Calu3 (cell line): ENCODE measurements at regions of chr2 and their contacts with region 1.

Region 1: DNA sequence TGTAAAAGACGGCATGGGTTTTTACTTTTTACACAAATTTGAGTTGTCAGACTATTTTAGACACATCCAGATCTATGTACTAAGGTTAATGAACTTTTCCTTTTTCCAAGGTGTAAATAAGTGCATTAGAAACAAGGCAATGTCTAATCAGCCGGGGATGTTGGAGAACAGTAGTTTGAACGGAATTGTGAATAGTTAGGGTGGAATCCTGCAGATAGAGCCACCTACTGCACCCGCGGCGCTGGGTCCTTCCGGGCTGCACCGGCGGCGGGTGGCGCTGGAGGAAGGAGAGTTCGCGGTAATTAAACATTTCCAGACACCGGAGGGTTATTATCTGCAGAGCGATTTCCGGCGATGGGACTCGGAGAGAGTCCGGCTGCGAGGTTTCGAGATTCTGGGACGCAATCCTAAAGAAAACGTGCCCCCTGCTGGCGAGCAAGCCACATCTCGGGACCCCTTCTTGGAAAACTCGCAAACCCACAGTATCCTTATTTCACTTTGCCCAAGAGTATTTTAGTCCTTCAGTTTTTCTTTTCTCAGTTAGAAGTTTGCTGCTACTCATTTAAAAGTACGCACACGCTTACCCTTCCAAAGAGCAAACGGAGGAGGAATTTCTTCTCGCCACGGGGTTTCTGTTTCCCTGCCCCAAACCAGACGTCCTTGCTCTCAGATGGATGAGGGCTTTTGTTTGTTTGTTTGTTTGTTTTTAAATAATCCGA is 4.5 kb upstream of the OSR1 start:
- DNase-seq: peak; percentile 82
- H3K4me3 Mint-ChIP-seq: peak overlapping the region; percentile 81
- H3K27ac Mint-ChIP-seq: peak overlapping the region; percentile 46
- H3K4me1 Mint-ChIP-seq: peaks cover 10% of the 10 kb centered on the region
- H3K27me3 Mint-ChIP-seq: peaks cover 57% of the 10 kb centered on the region
- CTCF ChIP-seq: peak; percentile 64

Region 2: DNA sequence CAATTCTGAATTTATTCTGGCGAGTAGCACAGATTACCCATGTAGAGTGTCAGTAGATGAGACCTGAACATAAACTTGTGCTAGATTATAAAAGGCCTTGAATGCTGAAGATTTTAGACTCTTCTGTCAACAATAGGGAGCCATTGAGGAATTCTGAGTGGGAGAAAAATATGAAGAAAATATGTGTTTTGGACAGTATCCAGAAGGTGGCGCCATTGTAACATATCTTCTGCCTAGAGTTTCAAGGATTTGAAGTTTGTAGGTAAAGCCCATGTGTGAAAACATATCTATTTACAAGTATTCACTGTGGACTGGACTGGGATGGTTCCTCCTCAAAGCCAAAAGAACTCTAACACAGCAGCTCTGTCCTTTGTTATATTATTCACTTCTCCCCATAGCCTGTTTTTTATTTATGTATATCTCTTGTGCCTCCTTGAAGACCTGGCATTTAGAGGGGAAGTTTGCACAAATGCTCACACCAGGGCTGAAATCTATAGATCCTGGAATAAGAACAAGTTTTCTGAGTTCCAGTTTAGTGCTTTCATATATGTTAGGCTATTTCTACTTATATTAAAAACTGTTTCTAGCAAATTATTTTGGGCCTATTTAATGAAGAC is 927.4 kb before region 1 on chr2:
- CTCF ChIA-PET with region 1: no interaction called
- intact Hi-C with region 1: loop called (anchors 5 kb)
- DNase-seq: peak; percentile 46
- H3K4me3 Mint-ChIP-seq: no peak overlapping the region
- H3K27ac Mint-ChIP-seq: no peak overlapping the region
- H3K4me1 Mint-ChIP-seq: no peaks in the 10 kb centered on the region
- H3K27me3 Mint-ChIP-seq: peaks cover 43% of the 10 kb centered on the region
- CTCF ChIP-seq: peak; percentile 59

Region 3: DNA sequence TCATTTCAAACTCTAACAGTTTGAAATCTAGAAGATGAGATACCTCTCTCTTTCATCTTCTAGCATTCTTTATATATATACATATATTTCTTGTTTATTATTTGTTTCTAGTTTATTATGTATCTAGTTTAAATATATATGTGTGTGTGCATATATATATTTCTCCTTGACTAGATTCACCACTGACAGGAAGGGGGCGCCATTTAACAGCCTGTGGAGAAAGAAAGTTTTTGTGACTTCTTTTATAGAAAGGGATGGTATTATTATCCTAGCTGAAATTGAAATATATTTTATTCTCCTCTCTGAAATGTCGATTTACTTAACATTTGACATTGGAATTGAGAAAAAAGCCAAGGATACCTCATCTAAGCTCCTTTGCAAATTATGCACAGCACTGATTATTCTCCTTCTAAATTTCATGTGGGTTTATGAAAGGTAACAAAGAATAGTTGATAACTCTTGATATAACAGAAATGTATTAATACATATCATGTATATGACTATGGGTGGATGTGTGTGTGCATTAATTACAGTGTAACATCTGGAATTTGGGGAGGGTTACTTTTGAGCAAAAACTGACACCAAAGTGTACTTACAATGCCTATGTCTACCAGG is 612.9 kb before region 1 on chr2:
- CTCF ChIA-PET with region 1: no interaction called
- intact Hi-C with region 1: loop called (anchors 1 kb)
- DNase-seq: peak; percentile 68
- H3K4me3 Mint-ChIP-seq: no peak overlapping the region
- H3K27ac Mint-ChIP-seq: no peak overlapping the region
- H3K4me1 Mint-ChIP-seq: no peaks in the 10 kb centered on the region
- H3K27me3 Mint-ChIP-seq: no peaks in the 10 kb centered on the region
- CTCF ChIP-seq: peak; percentile 42

Region 4: DNA sequence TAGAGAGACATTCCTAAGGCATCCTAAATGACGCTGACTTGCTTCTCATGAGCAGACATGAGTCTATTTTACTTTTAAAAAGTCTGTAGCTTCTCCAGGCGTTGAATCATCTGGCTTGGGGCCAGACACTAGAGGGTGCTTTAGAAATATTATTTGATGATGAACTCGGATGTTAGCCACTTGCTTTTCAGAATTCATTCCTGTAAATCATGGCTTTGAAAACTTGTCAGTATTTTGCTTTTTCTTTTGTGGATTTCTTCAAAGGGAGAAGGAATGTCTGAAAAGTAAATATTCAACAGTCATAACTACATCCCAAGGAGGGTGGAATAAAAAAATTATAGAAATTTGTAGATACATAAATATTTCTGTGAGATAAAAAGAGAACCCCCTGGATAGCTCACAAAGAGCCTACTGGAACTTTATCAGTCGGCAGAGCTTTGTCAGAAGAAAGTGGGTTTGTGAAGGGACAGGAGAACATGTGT is 375.3 kb before region 1 on chr2:
- CTCF ChIA-PET with region 1: no interaction called
- intact Hi-C with region 1: loop called (anchors 1 kb)
- DNase-seq: peak; percentile 64
- H3K4me3 Mint-ChIP-seq: no peak overlapping the region
- H3K27ac Mint-ChIP-seq: no peak overlapping the region
- H3K4me1 Mint-ChIP-seq: peaks cover 14% of the 10 kb centered on the region
- H3K27me3 Mint-ChIP-seq: no peaks in the 10 kb centered on the region
- CTCF ChIP-seq: no peak

Region 5: DNA sequence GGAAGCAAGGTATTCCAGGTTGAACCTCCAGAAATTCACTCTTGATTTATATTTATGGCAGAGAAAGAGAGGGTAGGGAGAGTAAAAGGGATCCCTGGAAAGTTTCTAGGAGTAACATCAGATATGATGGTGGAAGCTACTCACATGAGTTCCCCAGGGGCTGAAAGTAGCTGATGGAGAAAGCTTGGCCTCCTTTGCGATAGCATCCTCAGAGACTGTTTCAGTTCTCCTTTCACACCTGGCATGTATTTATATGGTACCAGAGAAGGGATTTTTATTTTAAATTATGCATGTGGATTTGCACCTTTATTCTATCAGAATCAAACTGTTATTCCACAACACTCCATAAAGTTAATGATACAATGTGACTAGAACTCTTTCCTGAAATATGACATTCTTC is 121.8 kb after region 1 on chr2:
- CTCF ChIA-PET with region 1: no interaction called
- intact Hi-C with region 1: no loop called
- DNase-seq: no peak
- H3K4me3 Mint-ChIP-seq: no peak overlapping the region
- H3K27ac Mint-ChIP-seq: no peak overlapping the region
- H3K4me1 Mint-ChIP-seq: peaks cover 25% of the 10 kb centered on the region
- H3K27me3 Mint-ChIP-seq: no peaks in the 10 kb centered on the region
- CTCF ChIP-seq: no peak

Region 6: GRCh38 chr2:19504400-19505198 is 141.7 kb after region 1 on chr2:
- CTCF ChIA-PET with region 1: no interaction called
- intact Hi-C with region 1: loop called (anchors 10 kb)
- DNase-seq: peak; percentile 39
- H3K4me3 Mint-ChIP-seq: peak overlapping the region; percentile 36
- H3K27ac Mint-ChIP-seq: peak overlapping the region; percentile 59
- H3K4me1 Mint-ChIP-seq: peaks cover 36% of the 10 kb centered on the region
- H3K27me3 Mint-ChIP-seq: no peaks in the 10 kb centered on the region
- CTCF ChIP-seq: no peak

Region 7: DNA sequence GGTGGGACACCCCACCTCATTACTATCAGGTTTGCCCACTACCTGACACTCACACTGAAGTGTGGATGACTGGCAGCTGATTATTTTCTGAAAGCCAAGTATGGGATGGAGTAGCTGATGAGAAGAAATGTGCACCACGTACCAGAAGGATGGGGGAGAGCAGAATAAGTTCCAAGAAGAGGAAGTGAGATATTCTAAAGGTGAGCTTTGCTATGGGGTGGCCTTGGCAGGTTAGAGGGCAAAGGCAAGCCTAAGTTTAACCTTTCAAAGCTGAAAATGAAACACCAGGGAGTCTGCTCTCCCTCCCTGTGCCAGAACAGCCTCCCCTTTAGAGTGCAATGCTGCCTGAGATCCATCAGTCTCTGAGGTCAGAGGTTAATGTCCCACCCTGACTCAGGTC is 191.6 kb after region 1 on chr2:
- CTCF ChIA-PET with region 1: no interaction called
- intact Hi-C with region 1: no loop called
- DNase-seq: no peak
- H3K4me3 Mint-ChIP-seq: no peak overlapping the region
- H3K27ac Mint-ChIP-seq: no peak overlapping the region
- H3K4me1 Mint-ChIP-seq: no peaks in the 10 kb centered on the region
- H3K27me3 Mint-ChIP-seq: peaks cover 14% of the 10 kb centered on the region
- CTCF ChIP-seq: no peak

Region 8: GRCh38 chr2:19667085-19667484 is 304.2 kb after region 1 on chr2:
- CTCF ChIA-PET with region 1: interaction called, 3 read pairs
- intact Hi-C with region 1: loop called (anchors 2 kb)
- DNase-seq: no peak
- H3K4me3 Mint-ChIP-seq: no peak overlapping the region
- H3K27ac Mint-ChIP-seq: no peak overlapping the region
- H3K4me1 Mint-ChIP-seq: peaks cover 25% of the 10 kb centered on the region
- H3K27me3 Mint-ChIP-seq: no peaks in the 10 kb centered on the region
- CTCF ChIP-seq: no peak